ENCODE measurements at regions of chr15 and their contacts with region 1.

Region 1: DNA sequence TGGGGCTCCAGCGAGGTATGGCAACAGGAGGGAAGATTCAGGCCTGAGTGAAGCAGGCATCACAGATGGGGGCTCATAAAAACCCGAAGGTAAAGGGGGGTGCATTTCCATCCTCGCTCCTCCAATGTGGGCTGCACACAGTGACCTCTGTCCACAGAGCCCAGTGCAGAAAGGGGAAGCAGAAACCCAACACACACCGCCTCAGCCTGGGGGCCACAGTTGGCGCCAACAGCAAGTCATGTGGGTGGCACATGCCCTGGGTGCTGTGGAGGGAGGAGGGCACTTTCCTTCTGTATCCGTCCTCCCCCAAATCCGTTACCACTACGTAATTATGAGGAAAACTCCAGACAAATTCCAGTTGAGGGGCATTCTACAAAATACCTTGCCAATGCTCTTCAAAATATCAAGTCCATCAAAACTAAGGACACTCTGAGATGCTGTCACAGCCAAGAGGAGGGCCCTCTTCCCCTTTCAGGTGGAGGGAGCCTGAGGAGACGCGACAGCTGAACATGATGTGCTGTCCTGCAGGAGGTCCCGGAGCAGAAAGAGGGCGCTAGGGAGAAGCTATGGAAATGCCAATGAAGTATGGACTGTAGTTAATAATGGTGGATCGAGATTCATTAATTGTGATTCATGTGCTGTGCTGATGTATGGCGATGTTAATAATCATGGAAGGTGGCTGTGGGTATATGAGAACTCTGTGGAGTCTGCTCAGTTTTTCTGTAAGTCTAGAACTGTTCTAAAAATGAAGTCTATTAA is 16.4 kb downstream of the APBA2 start:
- DNase-seq: peak; percentile 59
- ATAC-seq: peak; percentile 86
- H3K4me3 Mint-ChIP-seq: no peak overlapping the region
- H3K27ac Mint-ChIP-seq: no peak overlapping the region
- H3K4me1 Mint-ChIP-seq: no peaks in the 10 kb centered on the region; the same call in 1 of the 2 replicates
- H3K27me3 Mint-ChIP-seq: no peaks in the 10 kb centered on the region
- CTCF ChIP-seq: peak; percentile 33; the same call in 1 of the 2 replicates

Region 2: DNA sequence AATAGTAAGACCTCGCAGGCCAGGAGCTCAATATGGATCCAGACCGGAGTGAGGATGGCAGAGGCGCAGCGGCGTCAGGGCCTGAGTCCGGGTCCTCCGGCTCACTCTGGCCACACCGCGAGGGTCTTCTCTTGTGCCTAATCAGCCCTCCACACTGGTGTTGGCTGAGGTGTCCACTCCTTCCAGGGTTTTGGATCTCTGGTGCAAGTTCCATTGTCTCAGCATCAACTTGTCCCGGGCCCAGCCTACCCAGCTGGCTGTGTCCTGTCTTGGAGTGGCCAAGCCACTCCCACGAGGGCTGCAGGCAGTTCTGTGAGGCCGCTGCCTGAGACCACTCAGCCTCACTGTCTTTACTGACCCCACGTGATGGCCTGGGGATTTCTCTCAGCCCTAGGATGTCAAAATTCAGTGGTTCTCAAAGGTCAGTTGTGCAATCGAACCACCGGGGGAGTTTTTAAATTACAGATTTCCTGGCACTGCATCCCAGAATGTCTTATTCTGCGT is 41.1 kb before region 1 on chr15:
- CTCF ChIA-PET with region 1: no interaction called
- POLR2A ChIA-PET with region 1: no interaction called
- DNase-seq: no peak
- ATAC-seq: no peak; the same call in 1 of the 2 replicates
- H3K4me3 Mint-ChIP-seq: no peak overlapping the region
- H3K27ac Mint-ChIP-seq: no peak overlapping the region
- H3K4me1 Mint-ChIP-seq: no peaks in the 10 kb centered on the region
- H3K27me3 Mint-ChIP-seq: no peaks in the 10 kb centered on the region
- CTCF ChIP-seq: no peak

Region 3: DNA sequence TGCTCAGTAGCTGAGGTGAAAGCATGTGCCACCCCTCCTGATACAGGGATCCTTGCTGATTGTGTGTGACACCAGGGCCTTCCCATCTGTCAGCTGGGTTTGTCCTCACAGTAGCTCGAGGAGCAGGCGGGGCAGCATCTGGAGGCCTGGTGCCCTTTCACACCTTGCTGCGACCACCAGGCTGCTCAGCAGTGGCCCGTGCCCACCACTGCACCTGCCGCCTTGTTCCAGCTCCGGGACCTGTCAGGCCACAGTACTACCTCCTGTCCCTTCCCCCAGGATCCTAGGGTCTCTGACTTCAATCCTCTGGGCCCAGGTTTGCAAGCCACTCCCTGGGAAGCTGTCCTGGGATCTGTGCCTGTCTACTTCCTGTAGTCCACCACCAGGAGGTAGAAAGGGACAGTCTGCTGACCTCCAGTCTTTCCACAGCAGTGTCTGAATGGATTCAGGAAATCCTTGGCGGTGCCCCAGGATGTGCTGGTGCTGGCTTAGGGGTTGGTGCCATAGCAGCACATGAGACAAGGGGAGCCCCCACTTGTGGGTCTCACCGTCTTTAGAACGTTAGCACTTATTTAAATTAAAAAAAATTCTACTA is 11.1 kb after region 1 on chr15:
- CTCF ChIA-PET with region 1: interaction called, 18 read pairs
- POLR2A ChIA-PET with region 1: no interaction called
- DNase-seq: no peak
- ATAC-seq: peak; percentile 18
- H3K4me3 Mint-ChIP-seq: no peak overlapping the region
- H3K27ac Mint-ChIP-seq: no peak overlapping the region
- H3K4me1 Mint-ChIP-seq: peaks cover 32% of the 10 kb centered on the region
- H3K27me3 Mint-ChIP-seq: no peaks in the 10 kb centered on the region
- CTCF ChIP-seq: no peak

Region 4: DNA sequence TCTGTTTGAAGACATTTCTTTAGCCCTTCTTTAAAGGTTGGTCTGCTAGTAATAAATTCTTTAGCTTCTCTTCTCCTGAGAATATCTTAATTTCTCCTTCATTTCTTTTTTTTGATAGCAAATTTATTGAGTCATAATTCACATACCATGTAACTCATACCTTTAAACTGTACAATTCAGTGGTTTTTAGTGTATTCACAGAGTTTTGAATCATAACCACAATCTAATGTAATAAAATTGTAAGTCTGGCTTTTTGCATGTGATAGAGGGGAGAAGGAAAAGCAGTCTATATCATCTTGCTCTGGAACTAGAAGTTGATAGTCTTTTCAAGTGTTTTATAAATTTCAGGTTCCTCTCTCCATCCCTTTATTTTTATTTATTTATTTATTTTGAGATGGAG is 64.9 kb after region 1 on chr15:
- CTCF ChIA-PET with region 1: no interaction called
- POLR2A ChIA-PET with region 1: no interaction called
- DNase-seq: no peak
- ATAC-seq: no peak
- H3K4me3 Mint-ChIP-seq: no peak overlapping the region
- H3K27ac Mint-ChIP-seq: no peak overlapping the region
- H3K4me1 Mint-ChIP-seq: no peaks in the 10 kb centered on the region
- H3K27me3 Mint-ChIP-seq: no peaks in the 10 kb centered on the region
- CTCF ChIP-seq: no peak